Activated T-helper 2 cell treated with anti-CD3 and anti-CD28 coated beads, Interferon-gamma antibody, Interleukin-2, Interleukin-4, amounts not matched to agents 10 μg/mL and 5 μg/mL and 100 μg/mL, durations not matched to agents 14 hours and 24 hours and 36 hours (primary cell): ENCODE measurements at regions of chr5 and their contacts with region 1.

Region 1: GRCh38 chr5:74201334-74202081 is 439.0 kb downstream of the ENC1 start:
- DNase-seq: no peak
- H3K4me3 Mint-ChIP-seq: no peak overlapping the region
- H3K27ac Mint-ChIP-seq: no peak overlapping the region
- H3K4me1 Mint-ChIP-seq: peaks cover 33% of the 10 kb centered on the region
- H3K27me3 Mint-ChIP-seq: peaks cover 14% of the 10 kb centered on the region

Region 2: DNA sequence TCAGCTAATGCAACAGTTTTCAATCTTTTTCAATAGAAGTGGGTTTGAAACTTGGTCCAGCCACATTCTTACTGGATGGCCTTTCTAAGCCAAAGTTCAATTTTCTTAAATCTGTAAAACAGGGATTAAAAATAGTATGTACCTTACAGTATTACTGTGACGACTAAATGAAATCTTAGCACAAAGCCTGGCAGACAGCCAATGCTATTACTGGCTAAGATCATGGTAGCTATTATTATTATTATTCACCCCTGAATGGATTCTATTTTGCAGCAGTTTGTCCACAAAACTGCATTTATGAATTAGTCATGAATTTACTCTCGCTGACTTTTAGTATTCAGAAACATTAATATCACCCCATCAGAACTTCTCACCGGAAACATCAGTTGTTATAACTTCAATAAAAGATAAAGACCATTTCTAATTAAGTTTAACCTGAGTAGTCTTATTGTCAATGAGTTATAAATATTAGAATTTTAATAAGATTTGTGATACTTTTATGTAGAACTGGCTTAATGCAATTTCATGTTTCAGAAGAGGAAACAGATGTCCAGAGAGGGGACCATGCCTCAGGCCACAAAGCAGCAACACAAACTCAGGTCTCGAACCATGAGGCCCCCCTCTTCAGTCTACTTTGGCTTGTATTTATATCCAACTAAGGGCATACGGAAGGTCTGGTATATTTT is 107.3 kb before region 1 on chr5:
- intact Hi-C with region 1: no loop called
- DNase-seq: no peak
- H3K4me3 Mint-ChIP-seq: no peak overlapping the region
- H3K27ac Mint-ChIP-seq: no peak overlapping the region
- H3K4me1 Mint-ChIP-seq: no peaks in the 10 kb centered on the region
- H3K27me3 Mint-ChIP-seq: peaks cover 4% of the 10 kb centered on the region

Region 3: DNA sequence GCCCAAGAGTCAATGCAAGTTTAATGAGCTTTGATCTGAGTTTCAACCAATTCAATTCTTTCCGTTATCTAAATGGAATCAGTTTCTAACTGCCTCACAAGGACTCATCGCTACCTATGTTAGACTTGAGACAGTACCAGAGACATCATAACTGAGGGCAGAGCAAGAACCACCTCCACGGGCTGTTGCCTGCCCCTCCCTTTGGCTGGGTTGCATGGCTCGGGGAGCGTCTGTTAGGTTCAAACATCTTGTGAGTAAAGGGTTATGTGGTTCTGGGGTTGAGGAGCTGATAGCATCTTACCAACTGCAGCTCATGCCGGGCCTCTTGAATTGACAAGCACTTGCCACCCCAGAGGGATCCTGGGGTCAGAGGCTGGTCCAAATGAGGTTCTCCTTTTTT is 18.9 kb before region 1 on chr5:
- intact Hi-C with region 1: loop called (anchors 1 kb)
- DNase-seq: peak; percentile 51
- H3K4me3 Mint-ChIP-seq: no peak overlapping the region
- H3K27ac Mint-ChIP-seq: peak overlapping the region; percentile 14
- H3K4me1 Mint-ChIP-seq: peaks cover 22% of the 10 kb centered on the region
- H3K27me3 Mint-ChIP-seq: peaks cover 21% of the 10 kb centered on the region

Region 4: GRCh38 chr5:74240786-74241750 is 39.6 kb after region 1 on chr5:
- intact Hi-C with region 1: loop called (anchors 2 kb)
- DNase-seq: no peak
- H3K4me3 Mint-ChIP-seq: no peak overlapping the region
- H3K27ac Mint-ChIP-seq: no peak overlapping the region
- H3K4me1 Mint-ChIP-seq: peaks cover 6% of the 10 kb centered on the region
- H3K27me3 Mint-ChIP-seq: peaks cover 23% of the 10 kb centered on the region

Region 5: GRCh38 chr5:74316064-74316679 is 114.7 kb after region 1 on chr5:
- intact Hi-C with region 1: loop called (anchors 1 kb)
- DNase-seq: no peak
- H3K4me3 Mint-ChIP-seq: no peak overlapping the region
- H3K27ac Mint-ChIP-seq: no peak overlapping the region
- H3K4me1 Mint-ChIP-seq: peaks cover 6% of the 10 kb centered on the region
- H3K27me3 Mint-ChIP-seq: peaks cover 17% of the 10 kb centered on the region

Region 6: GRCh38 chr5:74382987-74383593 is 181.6 kb after region 1 on chr5:
- intact Hi-C with region 1: no loop called
- DNase-seq: no peak
- H3K4me3 Mint-ChIP-seq: no peak overlapping the region
- H3K27ac Mint-ChIP-seq: no peak overlapping the region
- H3K4me1 Mint-ChIP-seq: no peaks in the 10 kb centered on the region
- H3K27me3 Mint-ChIP-seq: peaks cover 21% of the 10 kb centered on the region

Region 7: DNA sequence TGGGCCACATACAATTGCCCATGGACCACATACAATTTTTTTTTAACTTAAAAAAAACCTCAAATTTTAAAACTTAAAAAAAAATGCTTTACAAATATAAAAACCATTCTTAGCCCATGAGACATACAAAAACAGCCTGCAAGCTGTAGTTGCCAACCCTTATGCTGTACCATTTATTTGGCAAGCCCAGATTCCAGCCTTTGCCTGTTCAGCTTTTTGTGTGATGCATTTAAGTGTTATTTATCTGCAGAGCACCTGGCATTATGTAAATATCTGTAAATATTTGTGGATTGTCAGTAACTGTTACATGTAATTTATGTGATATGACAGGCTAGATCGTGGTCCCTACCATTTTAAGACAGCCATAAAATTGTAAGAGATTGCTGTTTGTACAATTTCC is 516.1 kb after region 1 on chr5:
- intact Hi-C with region 1: no loop called
- DNase-seq: no peak
- H3K4me3 Mint-ChIP-seq: no peak overlapping the region
- H3K27ac Mint-ChIP-seq: no peak overlapping the region
- H3K4me1 Mint-ChIP-seq: no peaks in the 10 kb centered on the region
- H3K27me3 Mint-ChIP-seq: no peaks in the 10 kb centered on the region